Panc1 (cell line): ENCODE measurements at regions of chr9 and their contacts with region 1.

Region 1: DNA sequence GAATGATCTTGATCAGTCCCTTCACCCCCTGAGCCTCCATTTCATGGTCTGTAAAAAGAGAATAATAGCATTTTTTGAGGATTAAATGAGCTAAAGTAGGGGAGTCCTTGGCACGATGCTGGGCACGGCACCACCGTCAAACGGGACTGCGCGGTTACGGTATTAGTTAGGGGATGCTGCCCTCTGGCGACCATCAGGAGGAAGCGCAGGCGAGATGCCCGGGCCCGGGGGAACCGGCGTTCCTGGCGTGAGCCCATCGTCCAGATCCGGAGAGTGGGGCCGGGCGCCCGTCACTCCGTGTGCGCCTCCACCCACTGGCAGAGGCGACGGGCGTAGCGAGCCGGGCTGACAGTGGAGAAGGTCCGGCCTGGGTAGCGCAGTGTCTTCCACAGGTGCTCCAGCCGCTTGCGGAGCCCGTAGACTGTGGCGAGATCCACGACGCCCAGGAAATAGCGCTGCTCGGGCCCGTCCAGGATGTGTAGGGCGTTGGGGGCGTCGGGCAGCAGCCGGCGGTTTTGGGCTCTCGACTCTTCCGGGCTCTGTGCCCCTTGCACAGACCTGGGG is 4.8 kb upstream of the ST6GALNAC4 start:
- DNase-seq: no peak
- ATAC-seq: peak; percentile 27
- H3K4me3 ChIP-seq: peak overlapping the region in 1 of 2 experiments; percentile 20; a peak in 1 of 4 replicates
- H3K27ac ChIP-seq: peak overlapping the region; percentile 17; the same call in 1 of the 2 replicates
- H3K4me1 ChIP-seq: peaks cover 29% of the 10 kb centered on the region
- H3K27me3 ChIP-seq: no peaks in the 10 kb centered on the region
- CTCF ChIP-seq: peak; percentile 87

Region 2: DNA sequence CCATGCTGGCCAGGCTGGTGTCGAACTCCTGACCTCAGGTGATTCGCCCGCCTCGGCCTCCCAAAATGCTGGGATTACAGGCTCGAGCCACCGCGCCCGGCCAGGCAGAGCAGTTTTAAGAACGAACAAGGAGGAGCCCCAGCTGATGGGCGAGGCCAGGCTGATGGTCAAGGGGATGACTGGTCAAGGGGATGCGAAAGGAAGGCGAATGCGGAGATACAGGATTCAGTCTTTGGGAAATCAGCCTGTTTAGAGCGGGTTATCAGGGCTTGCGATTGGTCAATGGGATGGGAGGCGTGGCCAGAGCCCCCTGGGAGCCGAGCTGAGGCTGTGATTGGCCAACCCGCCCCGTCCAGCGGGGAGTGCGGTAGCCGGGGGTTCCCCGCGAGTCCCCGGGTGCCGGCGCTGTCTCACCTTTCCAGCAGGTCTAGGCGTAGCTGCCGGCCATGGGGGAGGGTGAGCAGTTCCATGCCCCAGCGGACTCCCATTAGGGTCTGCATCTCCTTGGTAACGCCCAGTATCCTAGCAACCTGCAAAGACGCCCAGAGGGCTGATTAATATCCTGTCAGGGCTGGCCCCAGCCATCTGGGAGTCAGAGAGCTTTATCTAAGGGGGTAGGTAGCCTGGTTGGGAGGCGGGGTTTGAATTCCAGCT is 179.1 kb before region 1 on chr9:
- CTCF ChIA-PET with region 1: no interaction called
- POLR2A ChIA-PET with region 1: no interaction called
- in situ Hi-C with region 1: no loop called
- intact Hi-C with region 1: loop called (anchors 5 kb)
- DNase-seq: no peak
- ATAC-seq: peak; percentile 84
- H3K4me3 ChIP-seq: peak overlapping the region; percentile 39 to 52
- H3K27ac ChIP-seq: no peak overlapping the region
- H3K4me1 ChIP-seq: no peaks in the 10 kb centered on the region
- H3K27me3 ChIP-seq: no peaks in the 10 kb centered on the region
- CTCF ChIP-seq: no peak

Region 3: DNA sequence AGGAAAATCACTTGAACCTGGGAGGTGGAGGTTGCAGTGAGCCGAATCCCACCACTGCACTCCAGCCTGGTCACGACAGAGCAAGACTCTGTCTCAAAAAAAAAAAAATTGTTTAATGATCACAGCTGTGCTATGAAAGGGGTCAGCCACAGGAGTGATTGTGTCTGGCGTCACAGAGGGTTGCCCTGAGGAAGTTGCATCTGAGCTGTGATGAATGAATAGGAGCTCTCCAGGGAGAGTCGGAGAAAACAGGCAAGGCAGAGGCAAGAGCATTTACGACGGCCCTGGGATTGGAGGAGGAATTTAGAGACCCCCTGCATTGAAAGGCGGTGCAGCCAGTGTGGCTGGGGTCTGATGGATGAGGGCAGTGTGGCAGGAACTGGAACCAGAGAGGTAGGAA is 120.4 kb after region 1 on chr9:
- CTCF ChIA-PET with region 1: interaction called, 14 read pairs
- POLR2A ChIA-PET with region 1: no interaction called
- in situ Hi-C with region 1: no loop called
- intact Hi-C with region 1: no loop called
- DNase-seq: no peak
- ATAC-seq: no peak
- H3K4me3 ChIP-seq: no peak overlapping the region
- H3K27ac ChIP-seq: no peak overlapping the region
- H3K4me1 ChIP-seq: no peaks in the 10 kb centered on the region
- H3K27me3 ChIP-seq: no peaks in the 10 kb centered on the region
- CTCF ChIP-seq: no peak

Region 4: GRCh38 chr9:128049843-128050242 is 128.2 kb after region 1 on chr9:
- CTCF ChIA-PET with region 1: no interaction called
- POLR2A ChIA-PET with region 1: interaction called, 14 read pairs
- in situ Hi-C with region 1: no loop called
- intact Hi-C with region 1: no loop called
- DNase-seq: no peak
- ATAC-seq: no peak
- H3K4me3 ChIP-seq: no peak overlapping the region
- H3K27ac ChIP-seq: no peak overlapping the region
- H3K4me1 ChIP-seq: no peaks in the 10 kb centered on the region
- H3K27me3 ChIP-seq: no peaks in the 10 kb centered on the region
- CTCF ChIP-seq: no peak